ENCODE measurements at regions of chr9 and their contacts with region 1.

Region 1: GRCh38 chr9:70229579-70229978 is 29.2 kb upstream of the SMC5 start:
- DNase-seq: no peak
- ATAC-seq: no peak
- H3K4me3 ChIP-seq: no peak overlapping the region
- H3K27ac ChIP-seq: no peak overlapping the region
- H3K4me1 ChIP-seq: no peaks in the 10 kb centered on the region
- H3K27me3 ChIP-seq: no peaks in the 10 kb centered on the region
- CTCF ChIP-seq: no peak; a peak in 1 of 6 replicates
- EP300 ChIP-seq: no peak
- POLR2A ChIP-seq: no peak
- RAD21 ChIP-seq: no peak

Region 2: DNA sequence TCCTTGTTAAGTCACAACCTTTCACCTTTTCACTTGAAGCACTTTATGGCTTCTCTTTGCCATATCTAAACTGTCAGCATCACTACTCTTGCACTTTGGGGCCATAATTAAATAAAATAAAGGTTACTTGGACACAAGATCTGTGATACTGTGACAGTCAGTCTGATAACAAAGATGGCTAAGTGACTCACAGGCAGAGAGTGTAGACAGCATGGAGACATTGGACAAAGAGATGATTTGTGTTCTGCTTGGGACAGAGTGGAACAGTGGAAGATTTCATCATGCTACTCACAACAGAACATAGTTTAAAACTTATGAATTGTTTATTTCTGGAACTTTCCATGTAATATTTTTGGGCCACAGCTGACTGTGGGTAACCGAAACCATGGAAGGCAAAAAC is 52.5 kb before region 1 on chr9:
- CTCF ChIA-PET with region 1: no interaction called
- POLR2A ChIA-PET with region 1: no interaction called
- RAD21 ChIA-PET with region 1: no interaction called
- SMC1A ChIA-PET with region 1: no interaction called
- in situ Hi-C with region 1: no loop called
- intact Hi-C with region 1: loop called (anchors 10 kb)
- DNase-seq: no peak
- ATAC-seq: no peak
- H3K4me3 ChIP-seq: no peak overlapping the region
- H3K27ac ChIP-seq: no peak overlapping the region
- H3K4me1 ChIP-seq: no peaks in the 10 kb centered on the region
- H3K27me3 ChIP-seq: no peaks in the 10 kb centered on the region
- CTCF ChIP-seq: no peak
- EP300 ChIP-seq: no peak
- POLR2A ChIP-seq: no peak
- RAD21 ChIP-seq: no peak

Region 3: GRCh38 chr9:70285246-70285645 is 55.7 kb after region 1 on chr9:
- CTCF ChIA-PET with region 1: no interaction called
- POLR2A ChIA-PET with region 1: no interaction called
- RAD21 ChIA-PET with region 1: no interaction called
- SMC1A ChIA-PET with region 1: no interaction called
- in situ Hi-C with region 1: no loop called
- intact Hi-C with region 1: loop called (anchors 10 kb)
- DNase-seq: no peak
- ATAC-seq: no peak
- H3K4me3 ChIP-seq: no peak overlapping the region
- H3K27ac ChIP-seq: no peak overlapping the region
- H3K4me1 ChIP-seq: no peaks in the 10 kb centered on the region
- H3K27me3 ChIP-seq: no peaks in the 10 kb centered on the region
- CTCF ChIP-seq: no peak
- EP300 ChIP-seq: no peak
- POLR2A ChIP-seq: no peak
- RAD21 ChIP-seq: no peak

Region 4: GRCh38 chr9:70303268-70303667 is 73.7 kb after region 1 on chr9:
- CTCF ChIA-PET with region 1: no interaction called
- POLR2A ChIA-PET with region 1: no interaction called
- RAD21 ChIA-PET with region 1: no interaction called
- SMC1A ChIA-PET with region 1: no interaction called
- in situ Hi-C with region 1: no loop called
- intact Hi-C with region 1: no loop called
- DNase-seq: no peak
- ATAC-seq: no peak
- H3K4me3 ChIP-seq: no peak overlapping the region
- H3K27ac ChIP-seq: no peak overlapping the region
- H3K4me1 ChIP-seq: no peaks in the 10 kb centered on the region
- H3K27me3 ChIP-seq: no peaks in the 10 kb centered on the region
- CTCF ChIP-seq: no peak
- EP300 ChIP-seq: no peak
- POLR2A ChIP-seq: no peak
- RAD21 ChIP-seq: no peak

Measured in GM12878 (cell line).